Gastrocnemius medialis (tissue), 4 donors: ENCODE measurements at regions of chr20 and their contacts with region 1.

Region 1: DNA sequence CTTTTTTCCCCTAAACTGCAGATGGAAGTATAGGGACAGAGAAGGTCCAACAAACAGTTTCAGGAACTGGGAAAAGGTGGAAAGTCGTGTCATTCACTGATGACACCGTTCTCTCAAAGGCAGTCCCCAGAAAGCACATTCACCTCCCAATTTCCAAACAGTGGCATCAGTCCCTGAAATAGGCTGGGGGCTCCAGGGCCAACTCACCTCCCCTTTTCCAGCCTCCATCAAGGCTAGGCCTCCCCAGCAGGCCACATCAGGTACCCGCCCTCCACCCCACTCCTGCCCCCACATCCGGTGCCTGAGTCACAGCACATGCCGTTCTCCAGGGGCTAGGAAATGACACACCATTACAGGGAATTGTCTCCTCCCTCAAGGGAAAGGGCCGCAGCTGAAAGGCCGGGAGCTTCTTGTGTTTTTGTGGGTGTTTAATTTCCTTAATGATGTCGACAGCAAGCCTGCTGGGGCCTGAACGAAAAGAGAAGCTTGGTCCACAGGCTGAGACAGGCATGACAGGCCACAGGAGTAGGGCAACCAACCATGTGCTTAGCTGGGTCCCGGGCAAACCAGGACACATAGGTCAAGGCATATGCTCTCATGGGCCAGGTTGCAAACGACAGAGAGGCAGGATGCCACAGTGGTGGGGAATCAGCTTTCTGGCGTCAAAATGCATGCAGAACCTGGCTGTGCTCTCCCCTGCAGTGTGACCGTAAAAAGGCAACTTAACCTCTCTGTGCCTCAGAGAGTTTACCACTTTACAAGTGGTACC is 39.2 kb downstream of the ZMYND8 start:
- DNase-seq: peak; percentile 89 to 96
- ATAC-seq: peak; percentile 65 to 74
- H3K4me3 ChIP-seq: peak overlapping the region; percentile 37 to 54 (median 47)
- H3K27ac ChIP-seq: peak overlapping the region; percentile 96 to 99 (median 98)
- H3K4me1 ChIP-seq: peaks cover 71 to 76% of the 10 kb centered on the region in 2 donors
- H3K27me3 ChIP-seq: no peaks in the 10 kb centered on the region
- CTCF ChIP-seq: peak in 1 of 5 experiments; percentile 27
- POLR2A ChIP-seq: peak; percentile 55 to 78

Region 2: DNA sequence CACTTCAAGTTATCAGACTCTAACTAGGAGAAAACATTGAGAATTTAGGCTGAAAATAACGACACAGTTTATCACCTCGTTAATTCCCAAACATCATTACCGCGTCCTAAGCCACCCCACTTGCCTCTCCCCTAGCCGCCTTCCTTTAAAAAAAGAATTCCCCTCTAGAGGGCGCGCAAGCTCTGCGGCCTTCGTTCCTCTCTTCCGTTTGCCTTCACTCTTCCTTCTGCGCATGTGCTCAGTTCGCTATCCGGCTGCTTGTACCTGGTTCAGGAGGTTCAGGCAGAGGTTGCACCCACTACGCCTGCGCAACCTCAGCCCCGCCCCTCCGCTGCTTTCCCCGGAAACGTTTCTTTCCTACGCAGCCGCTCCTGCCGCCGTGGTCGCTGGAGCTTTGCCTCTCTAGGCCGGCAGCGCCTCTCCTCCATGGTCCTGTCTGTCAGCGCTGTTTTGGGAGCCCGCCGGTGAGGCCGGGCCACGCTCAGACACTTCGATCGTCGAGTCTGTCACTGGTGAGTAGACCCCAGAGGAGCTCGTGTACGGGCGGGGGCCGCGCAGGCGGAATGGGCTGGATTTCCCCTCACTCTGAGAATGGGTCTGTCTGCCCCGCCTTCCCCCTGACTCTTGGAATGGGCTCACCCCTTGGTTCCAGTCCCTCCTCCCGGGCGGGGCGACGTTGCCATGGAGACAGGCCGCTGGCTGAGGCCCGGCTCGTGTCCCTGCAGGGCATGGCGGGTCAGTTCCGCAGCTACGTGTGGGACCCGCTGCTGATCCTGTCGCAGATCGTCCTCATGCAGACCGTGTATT is 1954.3 kb before region 1 on chr20 and contains the start of gene SYS1:
- in situ Hi-C with region 1: no loop called
- intact Hi-C with region 1: loop called (anchors 5 kb)
- DNase-seq: peak; percentile 98
- ATAC-seq: peak; percentile 63 to 76
- H3K4me3 ChIP-seq: peak within 1 kb of the TSS; percentile 66 to 86 (median 75)
- H3K27ac ChIP-seq: peak within 1 kb of the TSS; percentile 94 to 99 (median 96)
- H3K4me1 ChIP-seq: peaks cover 26 to 27% of the 10 kb centered on the region in 2 donors
- H3K27me3 ChIP-seq: no peaks in the 10 kb centered on the region
- CTCF ChIP-seq: peak; percentile 89 to 95 (median 95)
- POLR2A ChIP-seq: peak; percentile 90 to 97
- total RNA-seq, gene SYS1: 34.0 to 59.5 (median 43.7) TPM

Region 3: DNA sequence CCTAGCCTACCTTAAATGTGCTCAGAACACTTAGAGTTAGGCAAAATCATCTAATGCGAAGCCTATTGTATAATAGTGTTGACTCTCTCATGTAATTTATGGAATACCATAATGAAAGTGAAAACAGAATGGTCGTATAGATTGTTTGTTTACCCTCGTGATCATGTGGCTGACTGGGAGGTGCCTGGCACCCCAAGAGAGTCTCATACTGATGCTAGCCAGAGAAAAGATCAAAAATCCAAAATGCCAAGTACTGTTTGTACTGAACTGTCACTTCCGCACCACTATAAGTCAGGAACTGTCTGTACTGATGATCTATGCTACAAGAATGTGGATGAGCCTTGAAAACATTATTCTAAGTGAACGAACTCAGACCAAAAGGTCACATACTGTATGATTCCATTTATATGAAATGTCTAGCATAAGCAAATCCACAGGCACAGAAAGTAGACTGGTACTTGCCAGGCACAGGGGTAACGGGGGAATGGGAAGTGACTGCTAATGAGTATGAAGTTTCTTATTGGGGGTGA is 16.8 kb after region 1 on chr20:
- in situ Hi-C with region 1: no loop called
- intact Hi-C with region 1: loop called (anchors 2 kb)
- DNase-seq: peak; percentile 56 to 66
- ATAC-seq: peak; percentile 74 to 87
- H3K4me3 ChIP-seq: peak overlapping the region; percentile 27 to 39 (median 35)
- H3K27ac ChIP-seq: peak overlapping the region; percentile 78 to 91 (median 83)
- H3K4me1 ChIP-seq: peaks cover 68 to 88% of the 10 kb centered on the region in 2 donors
- H3K27me3 ChIP-seq: no peaks in the 10 kb centered on the region
- CTCF ChIP-seq: no peak
- POLR2A ChIP-seq: peak in 1 of 2 donors; percentile 31

Region 4: DNA sequence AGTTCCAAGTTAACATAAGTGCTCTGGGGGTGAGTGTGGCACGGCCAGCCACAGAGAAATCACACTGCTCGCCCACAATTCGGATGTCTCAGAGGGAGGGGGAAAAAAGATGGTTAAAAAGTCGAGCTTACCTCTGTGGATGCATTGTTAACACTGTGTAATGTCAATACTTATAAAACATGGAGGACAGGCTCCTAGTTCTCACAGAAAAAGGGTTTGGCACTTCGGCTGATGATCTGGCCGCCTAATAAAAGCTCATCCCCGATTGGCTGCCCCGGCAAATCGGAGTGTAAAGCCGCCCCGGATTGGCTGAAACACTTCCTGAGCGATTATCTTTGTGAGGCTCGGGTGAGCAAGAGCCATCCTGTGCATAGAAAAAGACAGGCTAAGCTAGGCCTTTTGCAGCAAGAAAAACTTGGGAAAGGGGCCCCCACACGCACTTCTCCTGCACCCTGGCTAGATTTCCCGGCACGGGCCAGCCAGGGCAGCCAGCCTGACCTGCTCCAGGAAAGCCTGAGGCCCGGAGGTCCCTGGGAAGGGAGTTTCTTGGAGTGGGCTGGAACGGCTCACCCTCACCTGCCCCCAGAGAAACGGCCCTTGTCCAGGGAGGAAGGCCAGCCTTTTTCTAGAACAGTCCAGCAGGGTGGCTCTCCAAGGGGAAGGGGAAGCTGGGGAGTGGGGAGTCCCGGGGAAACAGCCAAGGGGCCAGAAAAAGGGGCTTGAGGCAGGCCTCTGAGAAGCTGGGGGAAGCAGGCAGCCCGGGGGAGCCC is 39.4 kb after region 1 on chr20 and contains the start of gene ZMYND8:
- in situ Hi-C with region 1: loop called in 2 of 4 experiments (anchors 5 to 10 kb)
- intact Hi-C with region 1: loop called (anchors 1 kb)
- DNase-seq: peak; percentile 86 to 96
- ATAC-seq: peak; percentile 41 to 46
- H3K4me3 ChIP-seq: peak within 1 kb of the TSS; percentile 28 to 52 (median 44)
- H3K27ac ChIP-seq: peak within 1 kb of the TSS; percentile 96 to 100 (median 97)
- H3K4me1 ChIP-seq: peaks cover 97 to 99% of the 10 kb centered on the region in 2 donors
- H3K27me3 ChIP-seq: no peaks in the 10 kb centered on the region
- CTCF ChIP-seq: no peak
- POLR2A ChIP-seq: peak; percentile 14 to 57
- total RNA-seq, gene ZMYND8: 15.1 to 32.2 (median 19.7) TPM

Region 5: GRCh38 chr20:47379433-47380150 is 62.3 kb after region 1 on chr20:
- in situ Hi-C with region 1: no loop called
- intact Hi-C with region 1: loop called (anchors 1 kb)
- DNase-seq: no peak
- ATAC-seq: no peak
- H3K4me3 ChIP-seq: no peak overlapping the region
- H3K27ac ChIP-seq: no peak overlapping the region
- H3K4me1 ChIP-seq: peaks cover 2 to 10% of the 10 kb centered on the region in 2 donors
- H3K27me3 ChIP-seq: no peaks in the 10 kb centered on the region
- CTCF ChIP-seq: no peak
- POLR2A ChIP-seq: no peak

Region 6: DNA sequence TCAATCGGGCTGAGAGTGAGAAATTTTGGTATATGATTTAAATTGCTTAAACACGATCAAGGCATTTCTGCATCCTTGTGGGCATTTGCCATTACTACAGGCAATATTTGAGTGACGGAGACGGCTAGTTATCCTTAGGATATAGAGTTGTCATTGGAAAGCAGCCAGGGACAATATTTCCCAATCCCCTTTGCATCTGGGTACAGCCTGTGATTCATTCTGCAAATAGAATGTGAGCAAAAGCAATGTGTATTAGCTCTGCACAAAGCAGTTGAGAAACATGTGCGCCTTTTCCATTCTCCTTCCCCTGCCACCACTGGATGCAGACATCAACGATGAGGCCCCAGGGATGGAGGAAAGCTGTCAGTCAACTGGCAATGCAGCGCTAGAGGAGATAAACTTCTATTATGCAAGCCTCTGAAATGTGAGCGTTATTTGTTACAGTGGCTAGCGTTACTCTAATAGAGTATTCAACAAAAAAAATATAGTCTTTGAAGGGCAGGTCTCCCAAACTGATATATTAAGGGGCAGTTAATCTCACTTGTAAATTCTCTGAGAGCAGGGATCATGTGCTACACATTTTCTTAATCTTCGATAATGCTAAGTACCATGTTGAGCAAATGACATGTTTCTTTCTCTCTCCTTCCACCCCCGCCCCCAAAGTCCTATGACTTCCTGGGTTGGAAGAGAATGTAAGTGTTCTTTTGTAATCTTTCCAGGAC is 147.2 kb after region 1 on chr20:
- in situ Hi-C with region 1: no loop called
- intact Hi-C with region 1: loop called (anchors 5 kb)
- DNase-seq: peak; percentile 91 to 92
- ATAC-seq: peak; percentile 90 to 95
- H3K4me3 ChIP-seq: peak overlapping the region in 1 of 4 donors; percentile 17
- H3K27ac ChIP-seq: peak overlapping the region; percentile 84 to 95 (median 90)
- H3K4me1 ChIP-seq: peaks cover 22 to 33% of the 10 kb centered on the region in 2 donors
- H3K27me3 ChIP-seq: no peaks in the 10 kb centered on the region
- CTCF ChIP-seq: peak; percentile 59 to 85 (median 76)
- POLR2A ChIP-seq: peak; percentile 22 to 55

Region 7: DNA sequence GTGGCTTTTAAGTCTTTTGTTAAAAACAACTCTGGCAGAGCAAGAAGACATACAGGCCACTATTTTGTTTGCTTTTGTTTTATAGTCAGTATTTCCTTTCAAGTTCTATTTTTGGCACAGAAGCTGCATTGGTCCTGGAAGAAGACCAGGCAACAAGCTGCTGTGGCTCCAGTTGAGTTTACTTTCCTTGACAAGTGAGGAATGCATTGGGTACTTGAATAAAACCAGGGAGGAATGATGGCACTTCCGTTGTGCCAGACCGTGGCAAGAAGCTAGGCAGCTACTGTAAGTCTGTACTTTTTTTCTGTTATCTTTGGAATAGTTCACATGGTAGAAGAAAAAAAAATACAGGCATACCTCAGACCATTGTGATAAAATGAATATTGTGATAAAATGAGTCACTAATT is 250.7 kb after region 1 on chr20:
- in situ Hi-C with region 1: no loop called
- intact Hi-C with region 1: loop called (anchors 10 kb)
- DNase-seq: no peak
- ATAC-seq: peak in 1 of 2 donors; percentile 11
- H3K4me3 ChIP-seq: no peak overlapping the region
- H3K27ac ChIP-seq: peak overlapping the region; percentile 55 to 88 (median 83)
- H3K4me1 ChIP-seq: peaks cover 51 to 57% of the 10 kb centered on the region in 2 donors
- H3K27me3 ChIP-seq: no peaks in the 10 kb centered on the region
- CTCF ChIP-seq: no peak
- POLR2A ChIP-seq: no peak